ENCODE measurements at regions of chr1 and their contacts with region 1.

Region 1: GRCh38 chr1:201895913-201896807 is 7.5 kb downstream of the SHISA4 start:
- DNase-seq: peak; percentile 88
- H3K4me3 Mint-ChIP-seq: no peak overlapping the region
- H3K27ac Mint-ChIP-seq: peak overlapping the region; percentile 13
- H3K4me1 Mint-ChIP-seq: peaks cover 14% of the 10 kb centered on the region
- H3K27me3 Mint-ChIP-seq: peaks cover 21% of the 10 kb centered on the region

Region 2: GRCh38 chr1:201882665-201883132 is 13.5 kb before region 1 on chr1:
- CTCF ChIA-PET with region 1: interaction called, 57 read pairs
- POLR2A ChIA-PET with region 1: interaction called, 6 read pairs
- DNase-seq: no peak
- H3K4me3 Mint-ChIP-seq: no peak overlapping the region
- H3K27ac Mint-ChIP-seq: no peak overlapping the region
- H3K4me1 Mint-ChIP-seq: no peaks in the 10 kb centered on the region
- H3K27me3 Mint-ChIP-seq: peaks cover 13% of the 10 kb centered on the region

Region 3: DNA sequence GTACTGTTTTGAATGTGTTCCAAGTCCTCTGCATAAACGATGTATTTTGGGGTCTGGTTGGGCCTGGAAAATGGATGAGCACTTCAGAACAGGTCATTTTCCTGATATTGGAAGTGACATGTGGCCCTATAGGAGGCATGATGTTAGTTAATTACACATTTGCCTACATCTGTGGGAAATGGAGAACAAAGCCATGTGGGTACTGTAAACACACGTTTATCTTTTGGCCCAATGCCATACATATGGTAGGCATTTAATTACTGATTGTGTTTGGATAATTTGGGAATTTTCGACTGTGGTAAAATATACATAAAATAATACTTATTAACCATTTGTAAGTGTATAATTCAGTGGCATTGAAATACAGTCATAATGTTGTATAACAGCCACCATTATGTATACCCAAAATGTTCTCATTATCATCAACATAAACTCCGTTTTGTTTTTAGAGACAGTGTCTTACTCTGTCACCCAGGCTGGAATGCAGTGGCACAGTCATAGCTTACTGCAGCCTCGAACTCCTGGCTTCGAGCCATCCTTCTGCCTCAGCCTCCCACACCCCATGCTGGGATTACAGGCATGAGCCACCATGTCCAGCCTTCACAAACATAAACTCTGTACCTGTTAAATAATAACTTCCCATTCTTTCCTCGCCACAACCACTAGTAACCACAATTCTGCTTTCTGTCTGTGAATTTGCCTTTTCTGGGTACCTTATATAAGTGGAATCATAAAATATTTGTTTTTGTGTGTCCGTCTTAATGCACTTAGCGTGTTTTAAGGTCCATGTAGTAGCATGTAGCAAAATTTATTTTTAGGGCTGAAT is 74.4 kb after region 1 on chr1:
- CTCF ChIA-PET with region 1: interaction called, 50 read pairs
- POLR2A ChIA-PET with region 1: interaction called, 4 read pairs
- DNase-seq: no peak
- H3K4me3 Mint-ChIP-seq: no peak overlapping the region
- H3K27ac Mint-ChIP-seq: no peak overlapping the region
- H3K4me1 Mint-ChIP-seq: peaks cover 2% of the 10 kb centered on the region
- H3K27me3 Mint-ChIP-seq: peaks cover 11% of the 10 kb centered on the region

Region 4: GRCh38 chr1:201999625-202000238 is 103.6 kb after region 1 on chr1:
- CTCF ChIA-PET with region 1: interaction called, 11 read pairs
- POLR2A ChIA-PET with region 1: no interaction called
- DNase-seq: peak; percentile 32
- H3K4me3 Mint-ChIP-seq: no peak overlapping the region
- H3K27ac Mint-ChIP-seq: no peak overlapping the region
- H3K4me1 Mint-ChIP-seq: no peaks in the 10 kb centered on the region
- H3K27me3 Mint-ChIP-seq: no peaks in the 10 kb centered on the region

Region 5: GRCh38 chr1:202235856-202236837 is 340.0 kb after region 1 on chr1:
- CTCF ChIA-PET with region 1: no interaction called
- POLR2A ChIA-PET with region 1: no interaction called
- DNase-seq: peak; percentile 69
- H3K4me3 Mint-ChIP-seq: no peak overlapping the region
- H3K27ac Mint-ChIP-seq: no peak overlapping the region
- H3K4me1 Mint-ChIP-seq: peaks cover 6% of the 10 kb centered on the region
- H3K27me3 Mint-ChIP-seq: peaks cover 17% of the 10 kb centered on the region

Measured in activated CD4-positive, alpha-beta T cell treated with anti-CD3 and anti-CD28 coated beads, Interleukin-2, amount 10 ng/mL, durations not matched to agents 7 days and 5 days (primary cell).